Activated CD8-positive, alpha-beta T cell treated with anti-CD3 and anti-CD28 coated beads for 36 hours (primary cell): ENCODE measurements at regions of chr11 and their contacts with region 1.

Region 1: DNA sequence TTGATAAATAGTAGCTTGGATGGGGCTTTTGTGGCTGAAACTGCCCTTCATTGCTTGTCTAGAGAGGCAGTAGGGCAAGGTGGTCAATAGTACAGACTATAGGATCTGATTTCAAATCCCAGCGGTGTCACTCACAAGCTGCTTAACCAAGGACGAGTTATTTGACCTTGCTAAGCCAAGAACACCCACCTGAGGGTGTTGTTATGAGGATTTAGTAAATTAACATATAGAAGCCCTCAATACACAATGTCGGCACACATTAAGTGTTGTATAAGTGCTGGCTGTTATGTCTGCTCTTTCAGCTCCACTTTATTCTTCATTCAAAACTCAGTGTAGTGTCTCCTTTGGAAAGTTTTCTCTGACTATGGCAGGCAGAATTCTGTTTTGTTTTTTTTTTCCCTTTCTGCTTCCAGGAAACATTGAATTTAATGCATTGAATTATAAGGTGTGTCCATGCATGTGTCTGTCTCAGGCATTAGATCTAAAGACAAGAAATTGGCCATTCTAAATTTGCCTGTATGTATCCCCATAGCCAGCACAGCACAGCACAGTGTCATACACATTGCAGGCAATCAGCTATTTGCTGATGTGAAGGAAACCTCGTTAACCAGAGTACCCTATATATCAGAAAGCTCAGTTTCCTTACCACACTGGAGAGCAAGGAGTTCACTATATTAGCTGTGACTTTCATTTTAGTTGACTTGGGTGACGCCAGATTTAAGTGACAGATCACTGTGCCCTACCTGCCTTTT is 212.1 kb downstream of the NELL1 start:
- DNase-seq: no peak
- ATAC-seq: no peak
- H3K4me3 Mint-ChIP-seq: no peak overlapping the region
- H3K27ac Mint-ChIP-seq: no peak overlapping the region
- H3K4me1 Mint-ChIP-seq: no peaks in the 10 kb centered on the region
- H3K27me3 Mint-ChIP-seq: no peaks in the 10 kb centered on the region
- CTCF ChIP-seq: no peak

Region 2: DNA sequence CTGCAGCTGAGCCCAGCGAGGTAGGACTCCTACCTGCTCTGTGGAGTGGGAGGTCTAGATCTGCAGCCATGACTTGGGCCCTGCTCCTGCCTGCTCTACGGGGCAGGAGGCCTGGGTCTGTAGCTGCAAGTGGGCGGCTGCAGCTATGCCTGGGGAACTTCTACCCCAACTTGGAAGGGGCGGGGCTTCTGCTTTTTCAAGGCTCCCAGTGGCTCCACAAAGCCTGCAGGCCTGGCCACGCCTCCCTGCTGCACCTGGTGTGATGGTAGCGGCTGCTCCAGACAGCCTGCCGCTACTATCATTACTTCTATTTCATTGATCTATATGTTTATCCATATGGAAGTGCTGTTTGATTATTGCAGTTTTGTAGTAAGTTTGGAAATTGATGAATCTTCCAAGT is 90.9 kb before region 1 on chr11:
- CTCF ChIA-PET with region 1: no interaction called
- POLR2A ChIA-PET with region 1: no interaction called
- intact Hi-C with region 1: no loop called
- DNase-seq: no peak
- ATAC-seq: no peak
- H3K4me3 Mint-ChIP-seq: no peak overlapping the region
- H3K27ac Mint-ChIP-seq: no peak overlapping the region
- H3K4me1 Mint-ChIP-seq: no peaks in the 10 kb centered on the region
- H3K27me3 Mint-ChIP-seq: no peaks in the 10 kb centered on the region
- CTCF ChIP-seq: no peak

Region 3: DNA sequence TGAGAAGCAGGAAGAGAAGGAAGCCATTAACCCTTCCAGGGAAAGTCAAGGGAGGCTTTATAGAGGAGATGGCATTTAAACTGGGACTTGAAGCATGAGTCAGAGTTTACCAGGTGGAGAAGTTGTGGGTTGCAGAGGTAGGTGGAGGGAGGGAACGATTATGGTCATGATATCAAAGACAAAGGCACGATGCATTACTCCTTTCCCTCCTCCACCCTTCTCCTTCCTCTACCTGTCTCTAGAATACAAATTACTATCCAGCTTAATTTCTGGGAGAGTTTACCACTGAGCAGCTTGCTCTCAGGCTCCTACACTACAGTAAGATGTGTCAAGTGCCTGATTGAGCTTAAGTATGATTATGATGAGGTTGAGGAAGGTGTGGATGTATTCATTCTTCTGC is 60.5 kb before region 1 on chr11:
- CTCF ChIA-PET with region 1: no interaction called
- POLR2A ChIA-PET with region 1: no interaction called
- intact Hi-C with region 1: no loop called
- DNase-seq: no peak
- ATAC-seq: no peak
- H3K4me3 Mint-ChIP-seq: no peak overlapping the region
- H3K27ac Mint-ChIP-seq: no peak overlapping the region
- H3K4me1 Mint-ChIP-seq: no peaks in the 10 kb centered on the region
- H3K27me3 Mint-ChIP-seq: no peaks in the 10 kb centered on the region
- CTCF ChIP-seq: no peak

Region 4: DNA sequence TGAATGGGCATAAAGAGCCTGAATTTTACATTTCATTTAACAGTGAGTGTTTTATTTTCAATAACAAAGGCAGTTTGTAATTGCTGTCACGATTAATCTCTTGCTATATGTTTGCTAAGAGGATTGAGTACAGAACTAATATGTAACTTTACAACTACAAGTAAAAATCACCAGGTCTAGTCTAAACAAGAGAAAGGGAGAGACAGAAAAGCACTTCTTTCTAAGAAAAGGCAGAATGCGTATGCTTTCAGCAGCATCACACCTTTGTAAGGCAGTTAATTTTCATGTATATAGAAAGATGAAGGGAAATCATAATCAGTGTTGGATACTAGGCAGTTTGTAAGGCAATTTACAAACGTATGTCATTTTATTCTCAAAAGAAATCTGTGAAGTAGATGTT is 42.3 kb before region 1 on chr11:
- CTCF ChIA-PET with region 1: no interaction called
- POLR2A ChIA-PET with region 1: no interaction called
- intact Hi-C with region 1: loop called (anchors 5 kb)
- DNase-seq: no peak
- ATAC-seq: no peak
- H3K4me3 Mint-ChIP-seq: no peak overlapping the region
- H3K27ac Mint-ChIP-seq: no peak overlapping the region
- H3K4me1 Mint-ChIP-seq: no peaks in the 10 kb centered on the region
- H3K27me3 Mint-ChIP-seq: no peaks in the 10 kb centered on the region
- CTCF ChIP-seq: no peak

Region 5: GRCh38 chr11:20894296-20894695 is 12.8 kb after region 1 on chr11:
- CTCF ChIA-PET with region 1: no interaction called
- POLR2A ChIA-PET with region 1: no interaction called
- intact Hi-C with region 1: no loop called
- DNase-seq: no peak
- ATAC-seq: no peak
- H3K4me3 Mint-ChIP-seq: no peak overlapping the region
- H3K27ac Mint-ChIP-seq: no peak overlapping the region
- H3K4me1 Mint-ChIP-seq: no peaks in the 10 kb centered on the region
- H3K27me3 Mint-ChIP-seq: no peaks in the 10 kb centered on the region
- CTCF ChIP-seq: no peak

Region 6: DNA sequence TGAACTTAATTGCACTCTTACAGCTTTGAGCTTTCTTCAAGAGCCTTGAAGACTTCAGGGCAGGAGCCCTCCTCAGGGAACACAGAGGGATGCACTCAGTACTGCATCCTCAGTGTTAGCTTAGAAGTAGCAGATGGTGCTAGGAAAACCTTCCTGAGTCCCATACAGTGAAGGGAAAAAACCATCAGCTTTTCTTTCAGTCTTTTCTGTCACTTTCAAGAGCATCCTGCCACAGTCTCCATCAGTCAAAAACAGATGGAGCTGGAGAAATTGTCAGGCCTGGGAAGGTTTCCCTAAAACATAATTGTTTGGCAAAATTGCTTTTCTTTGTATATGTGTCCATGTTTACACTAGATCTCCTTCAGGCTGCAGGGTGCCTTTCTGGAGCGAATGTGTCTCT is 172.0 kb after region 1 on chr11:
- CTCF ChIA-PET with region 1: no interaction called
- POLR2A ChIA-PET with region 1: no interaction called
- intact Hi-C with region 1: no loop called
- DNase-seq: no peak
- ATAC-seq: no peak
- H3K4me3 Mint-ChIP-seq: no peak overlapping the region
- H3K27ac Mint-ChIP-seq: no peak overlapping the region
- H3K4me1 Mint-ChIP-seq: no peaks in the 10 kb centered on the region
- H3K27me3 Mint-ChIP-seq: no peaks in the 10 kb centered on the region
- CTCF ChIP-seq: no peak